ENCODE measurements at regions of chr6 and their contacts with region 1.

Region 1: GRCh38 chr6:4135665-4136353 is 434 bp upstream of the ECI2 start:
- DNase-seq: peak; percentile 91
- ATAC-seq: peak; percentile 92
- H3K4me3 ChIP-seq: peak overlapping the region; percentile 70 to 85 (median 72)
- H3K4me3 Mint-ChIP-seq: peak overlapping the region; percentile 90
- H3K27ac ChIP-seq: peak overlapping the region; percentile 37 to 57
- H3K27ac Mint-ChIP-seq: peak overlapping the region; percentile 85
- H3K4me1 ChIP-seq: peaks cover 15 to 21% of the 10 kb centered on the region in 2 donors
- H3K4me1 Mint-ChIP-seq: peaks cover 23% of the 10 kb centered on the region
- H3K27me3 ChIP-seq: no peaks in the 10 kb centered on the region
- H3K27me3 Mint-ChIP-seq: no peaks in the 10 kb centered on the region
- CTCF ChIP-seq: no peak

Region 2: DNA sequence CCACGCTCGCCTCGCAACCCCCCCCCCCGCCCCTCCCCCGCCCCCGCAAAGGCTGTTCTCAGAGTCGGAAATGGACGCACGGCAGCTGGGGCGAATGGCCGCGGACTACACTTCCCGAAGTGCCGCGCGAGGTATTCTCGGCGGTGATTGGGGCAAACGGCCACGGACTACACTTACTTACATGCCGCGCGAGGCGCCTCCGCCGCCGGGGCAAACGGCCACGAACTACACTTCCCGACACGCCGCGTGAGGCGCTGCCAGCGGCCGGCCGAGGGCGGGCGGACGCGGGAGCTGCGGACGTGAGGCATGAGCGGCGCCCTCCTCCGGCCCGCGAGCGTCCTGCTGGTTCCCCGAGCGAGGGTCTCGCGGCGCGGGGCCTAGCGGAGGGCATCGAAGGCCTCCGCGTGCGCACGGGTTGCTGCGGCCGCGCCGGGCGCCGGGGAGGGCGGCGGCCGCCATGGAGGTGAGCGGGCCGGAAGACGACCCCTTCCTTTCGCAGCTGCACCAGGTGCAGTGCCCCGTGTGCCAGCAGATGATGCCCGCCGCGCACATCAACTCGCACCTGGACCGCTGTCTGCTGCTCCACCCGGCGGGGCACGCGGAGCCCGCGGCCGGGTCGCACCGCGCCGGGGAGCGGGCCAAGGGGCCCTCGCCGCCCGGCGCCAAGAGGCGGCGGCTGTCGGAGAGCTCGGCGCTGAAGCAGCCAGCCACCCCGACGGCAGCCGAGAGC is 1370.5 kb before region 1 on chr6 and contains the start of gene WRNIP1:
- CTCF ChIA-PET with region 1: no interaction called
- POLR2A ChIA-PET with region 1: no interaction called
- intact Hi-C with region 1: loop called (anchors 10 kb)
- DNase-seq: peak; percentile 98
- ATAC-seq: peak; percentile 87
- H3K4me3 ChIP-seq: peak within 1 kb of the TSS; percentile 66 to 90 (median 77)
- H3K4me3 Mint-ChIP-seq: peak within 1 kb of the TSS; percentile 98
- H3K27ac ChIP-seq: peak within 1 kb of the TSS; percentile 96 to 97
- H3K27ac Mint-ChIP-seq: peak within 1 kb of the TSS; percentile 100
- H3K4me1 ChIP-seq: peaks cover 25 to 33% of the 10 kb centered on the region in 2 donors
- H3K4me1 Mint-ChIP-seq: peaks cover 43% of the 10 kb centered on the region
- H3K27me3 ChIP-seq: no peaks in the 10 kb centered on the region
- H3K27me3 Mint-ChIP-seq: no peaks in the 10 kb centered on the region
- CTCF ChIP-seq: peak; percentile 60
- total RNA-seq, gene WRNIP1: 32.1 and 35.2 TPM in 2 replicates

Region 3: GRCh38 chr6:3162565-3163247 is 973.1 kb before region 1 on chr6:
- CTCF ChIA-PET with region 1: no interaction called
- POLR2A ChIA-PET with region 1: no interaction called
- intact Hi-C with region 1: loop called (anchors 2 kb)
- DNase-seq: peak; percentile 81
- ATAC-seq: peak; percentile 79
- H3K4me3 ChIP-seq: peak overlapping the region in 4 of 5 experiments; percentile 71 to 81 (median 78)
- H3K4me3 Mint-ChIP-seq: peak overlapping the region; percentile 83
- H3K27ac ChIP-seq: peak overlapping the region in 1 of 2 donors; percentile 51
- H3K27ac Mint-ChIP-seq: peak overlapping the region; percentile 71
- H3K4me1 ChIP-seq: peaks cover 10 to 18% of the 10 kb centered on the region in 2 donors
- H3K4me1 Mint-ChIP-seq: peaks cover 23% of the 10 kb centered on the region
- H3K27me3 ChIP-seq: peaks cover 0 to 10% (median 0%) of the 10 kb centered on the region in 4 experiments
- H3K27me3 Mint-ChIP-seq: peaks cover 4% of the 10 kb centered on the region
- CTCF ChIP-seq: no peak

Region 4: GRCh38 chr6:3751730-3752542 is 383.9 kb before region 1 on chr6:
- CTCF ChIA-PET with region 1: interaction called, 4 read pairs
- POLR2A ChIA-PET with region 1: no interaction called
- intact Hi-C with region 1: loop called (anchors 5 kb)
- DNase-seq: peak; percentile 86
- ATAC-seq: peak; percentile 73
- H3K4me3 ChIP-seq: peak overlapping the region in 4 of 5 experiments; percentile 45 to 73 (median 62)
- H3K4me3 Mint-ChIP-seq: peak overlapping the region; percentile 75
- H3K27ac ChIP-seq: peak overlapping the region; percentile 36
- H3K27ac Mint-ChIP-seq: peak overlapping the region; percentile 53
- H3K4me1 ChIP-seq: peaks cover 36 to 51% of the 10 kb centered on the region in 2 donors
- H3K4me1 Mint-ChIP-seq: peaks cover 57% of the 10 kb centered on the region
- H3K27me3 ChIP-seq: peaks cover 0 to 19% (median 5%) of the 10 kb centered on the region in 4 experiments
- H3K27me3 Mint-ChIP-seq: peaks cover 7% of the 10 kb centered on the region
- CTCF ChIP-seq: peak; percentile 67

Region 5: DNA sequence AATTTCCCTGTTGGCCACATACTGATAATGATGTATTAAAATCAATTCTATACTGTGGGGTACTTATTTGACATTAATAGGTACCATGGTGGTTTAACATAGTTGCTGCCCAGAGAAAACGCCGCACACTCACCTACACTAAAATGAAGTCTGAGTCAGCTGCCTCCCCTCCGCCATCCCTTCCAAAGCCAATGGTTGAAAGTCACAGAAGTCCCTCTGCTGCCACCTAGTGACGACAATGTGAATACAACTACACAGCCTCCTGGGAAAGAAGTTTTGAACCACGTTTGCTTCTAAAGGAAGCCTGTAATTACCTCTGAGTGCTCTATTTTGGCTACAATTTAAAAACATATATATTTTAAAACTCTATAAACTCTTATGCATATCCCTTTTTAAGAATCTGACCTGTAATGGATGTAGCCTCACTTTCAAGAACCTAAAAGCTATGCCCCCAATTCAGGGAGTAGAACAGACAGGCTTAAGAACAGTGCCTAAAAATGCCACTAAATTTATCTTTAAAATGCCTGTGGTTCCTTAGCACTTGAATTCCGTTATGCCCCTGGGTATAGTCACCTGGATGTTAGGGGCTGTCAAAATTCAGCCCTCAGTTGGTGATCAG is 20.1 kb after region 1 on chr6:
- CTCF ChIA-PET with region 1: interaction called, 130 read pairs
- POLR2A ChIA-PET with region 1: interaction called, 13 read pairs
- intact Hi-C with region 1: loop called (anchors 1 kb)
- DNase-seq: peak; percentile 85
- ATAC-seq: peak; percentile 78
- H3K4me3 ChIP-seq: no peak overlapping the region
- H3K4me3 Mint-ChIP-seq: no peak overlapping the region
- H3K27ac ChIP-seq: no peak overlapping the region
- H3K27ac Mint-ChIP-seq: no peak overlapping the region
- H3K4me1 ChIP-seq: peaks cover 4 to 12% of the 10 kb centered on the region in 2 donors
- H3K4me1 Mint-ChIP-seq: peaks cover 31% of the 10 kb centered on the region
- H3K27me3 ChIP-seq: peaks cover 0 to 6% (median 0%) of the 10 kb centered on the region in 4 experiments
- H3K27me3 Mint-ChIP-seq: peaks cover 10% of the 10 kb centered on the region
- CTCF ChIP-seq: peak; percentile 94

Region 6: GRCh38 chr6:5260661-5261544 is 1125.1 kb after region 1 on chr6 and contains the starts of genes FARS2 and LYRM4:
- CTCF ChIA-PET with region 1: no interaction called
- POLR2A ChIA-PET with region 1: no interaction called
- intact Hi-C with region 1: loop called (anchors 5 kb)
- DNase-seq: peak; percentile 99
- ATAC-seq: peak; percentile 81
- H3K4me3 ChIP-seq: peak within 1 kb of the TSS; percentile 77 to 96 (median 93)
- H3K4me3 Mint-ChIP-seq: peak within 1 kb of the TSS; percentile 92
- H3K27ac ChIP-seq: peak within 1 kb of the TSS; percentile 96 to 97
- H3K27ac Mint-ChIP-seq: peak within 1 kb of the TSS; percentile 99
- H3K4me1 ChIP-seq: peaks cover 15 to 23% of the 10 kb centered on the region in 2 donors
- H3K4me1 Mint-ChIP-seq: peaks cover 24% of the 10 kb centered on the region
- H3K27me3 ChIP-seq: no peaks in the 10 kb centered on the region
- H3K27me3 Mint-ChIP-seq: no peaks in the 10 kb centered on the region
- CTCF ChIP-seq: no peak
- total RNA-seq, gene FARS2: 35.5 TPM in 2 replicates
- total RNA-seq, gene LYRM4: 22.1 and 24.6 TPM in 2 replicates